ENCODE measurements at regions of chrX and their contacts with region 1.

Region 1: GRCh38 chrX:154317391-154317995 is 21.9 kb downstream of the TKTL1 start:
- DNase-seq: peak in 1 of 5 donors; percentile 21
- ATAC-seq: peak in 2 of 4 donors; percentile 41 to 53
- H3K4me3 ChIP-seq: no peak overlapping the region
- H3K27ac ChIP-seq: no peak overlapping the region
- H3K4me1 ChIP-seq: peaks cover 0 to 4% (median 0%) of the 10 kb centered on the region in 12 donors
- H3K27me3 ChIP-seq: peaks cover 0 to 6% (median 0%) of the 10 kb centered on the region in 9 donors
- CTCF ChIP-seq: peak; percentile 22 to 61 (median 36)
- POLR2A ChIP-seq: no peak

Region 2: DNA sequence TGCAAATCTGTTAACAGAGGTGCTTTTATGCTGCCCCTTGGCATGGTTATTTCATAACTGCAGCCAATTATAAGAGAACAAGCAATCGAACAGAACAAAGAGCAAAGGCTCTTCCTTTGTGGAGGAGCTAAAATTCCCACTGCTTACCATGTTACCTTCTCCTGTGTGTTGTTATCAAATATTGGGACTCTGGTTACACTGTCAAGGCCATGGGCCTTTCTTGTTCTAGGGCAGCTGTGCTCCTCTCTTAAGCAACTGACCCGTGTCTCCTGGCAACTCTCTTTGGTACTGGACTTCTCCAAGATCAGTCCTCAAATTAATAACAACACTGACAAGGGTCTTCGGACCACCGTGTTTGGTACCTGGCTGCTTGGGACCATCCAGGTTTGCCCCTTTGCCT is 185.5 kb before region 1 on chrX:
- intact Hi-C with region 1: loop called in 1 of 10 experiments (anchors 5 kb)
- DNase-seq: no peak
- ATAC-seq: no peak
- H3K4me3 ChIP-seq: no peak overlapping the region
- H3K27ac ChIP-seq: no peak overlapping the region
- H3K4me1 ChIP-seq: peaks cover 0 to 15% (median 3%) of the 10 kb centered on the region in 12 donors
- H3K27me3 ChIP-seq: peaks cover 0 to 24% (median 0%) of the 10 kb centered on the region in 9 donors
- CTCF ChIP-seq: no peak
- POLR2A ChIP-seq: no peak

Region 3: DNA sequence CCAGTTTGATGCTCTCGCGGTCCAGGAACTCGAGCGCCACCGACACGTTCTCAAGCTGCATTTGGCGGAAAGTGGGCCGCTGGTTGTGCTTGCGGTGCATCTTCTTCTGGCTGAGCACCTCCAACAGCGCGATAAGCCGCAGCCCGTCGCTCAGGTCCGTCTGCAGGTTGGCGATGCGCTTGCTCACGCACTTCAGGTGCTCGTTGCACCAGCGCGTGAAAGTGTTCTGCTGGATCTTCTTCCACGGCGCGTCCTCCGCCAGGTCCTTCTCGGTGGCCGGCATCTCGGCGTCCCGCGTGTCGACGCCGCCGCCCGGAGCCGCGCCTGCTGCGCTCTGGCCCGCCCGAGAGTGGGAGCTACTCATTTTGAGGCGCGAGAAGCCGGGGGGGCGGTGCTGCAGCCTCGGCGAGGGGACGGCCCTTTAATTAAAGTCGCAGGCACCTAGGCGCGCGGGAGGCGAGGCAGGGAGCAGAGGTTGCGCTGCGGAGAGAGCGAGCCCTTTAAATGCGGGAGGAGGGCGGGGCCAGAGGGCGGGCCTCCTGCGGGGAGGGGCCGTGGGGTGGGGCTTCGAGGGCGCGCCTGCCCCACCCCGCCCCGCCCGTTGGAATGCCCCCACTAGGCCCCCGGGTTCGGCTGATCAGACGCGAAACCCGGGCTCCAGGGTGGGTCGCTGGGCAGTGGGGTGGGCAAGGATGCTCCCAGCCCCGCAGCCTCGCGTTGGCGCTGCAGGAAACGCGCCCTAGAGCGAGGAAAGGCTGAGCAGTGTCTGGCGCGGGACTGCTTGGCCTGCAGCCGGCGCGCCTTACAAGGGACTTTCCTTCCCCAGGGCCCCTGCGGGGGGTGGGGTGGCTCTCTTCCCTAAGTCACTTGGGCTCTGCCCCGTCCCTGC is 53.6 kb after region 1 on chrX:
- intact Hi-C with region 1: loop called in 1 of 10 experiments (anchors 2 kb)
- DNase-seq: peak; percentile 94 to 97 (median 96)
- ATAC-seq: peak; percentile 47 to 73 (median 66)
- H3K4me3 ChIP-seq: peak overlapping the region; percentile 73 to 99 (median 82)
- H3K27ac ChIP-seq: peak overlapping the region; percentile 78 to 100 (median 96)
- H3K4me1 ChIP-seq: peaks cover 0 to 59% (median 30%) of the 10 kb centered on the region in 12 donors
- H3K27me3 ChIP-seq: no peaks in the 10 kb centered on the region
- CTCF ChIP-seq: no peak
- POLR2A ChIP-seq: peak; percentile 93 to 99